AG04450 (cell line): ENCODE measurements at regions of chr2 and their contacts with region 1.

Region 1: GRCh38 chr2:219073413-219074129 is 12.8 kb upstream of the IHH start:
- DNase-seq: peak; percentile 27
- H3K4me3 ChIP-seq: no peak overlapping the region
- H3K27ac ChIP-seq: no peak overlapping the region
- H3K27me3 ChIP-seq: no peaks in the 10 kb centered on the region
- CTCF ChIP-seq: peak; percentile 63

Region 2: GRCh38 chr2:219057709-219058540 is 15.6 kb before region 1 on chr2:
- CTCF ChIA-PET with region 1: interaction called, 32 read pairs
- POLR2A ChIA-PET with region 1: interaction called, 3 read pairs
- DNase-seq: no peak
- H3K4me3 ChIP-seq: peak overlapping the region; percentile 13; the same call in 1 of the 2 replicates
- H3K27ac ChIP-seq: no peak overlapping the region
- H3K27me3 ChIP-seq: peaks cover 78% of the 10 kb centered on the region
- CTCF ChIP-seq: peak; percentile 89

Region 3: GRCh38 chr2:219104107-219105035 is 30.8 kb after region 1 on chr2:
- CTCF ChIA-PET with region 1: interaction called, 29 read pairs
- POLR2A ChIA-PET with region 1: no interaction called
- DNase-seq: no peak
- H3K4me3 ChIP-seq: no peak overlapping the region
- H3K27ac ChIP-seq: no peak overlapping the region
- H3K27me3 ChIP-seq: no peaks in the 10 kb centered on the region
- CTCF ChIP-seq: peak; percentile 84

Region 4: DNA sequence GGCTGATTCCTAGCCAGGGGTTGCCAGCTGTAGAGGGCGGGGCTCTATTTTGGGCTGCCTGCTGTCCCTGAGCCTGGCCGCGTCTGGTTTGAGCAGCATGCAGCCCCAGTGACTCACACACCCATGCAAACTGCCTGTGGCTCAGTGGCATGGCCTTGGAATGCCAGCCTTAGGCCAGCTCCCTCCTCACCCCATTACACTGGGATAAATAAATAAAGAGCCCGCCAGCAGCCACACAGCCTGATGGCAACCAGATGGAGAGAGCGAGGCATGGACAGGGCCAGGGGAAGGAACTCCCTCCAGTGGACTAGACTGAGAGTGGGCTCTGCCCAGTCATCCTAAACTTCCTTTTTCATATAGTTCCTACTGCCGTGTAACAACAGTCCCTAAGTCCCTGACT is 68.8 kb after region 1 on chr2:
- CTCF ChIA-PET with region 1: interaction called, 22 read pairs
- POLR2A ChIA-PET with region 1: no interaction called
- DNase-seq: peak; percentile 32
- H3K4me3 ChIP-seq: no peak overlapping the region
- H3K27ac ChIP-seq: peak overlapping the region; percentile 11
- H3K27me3 ChIP-seq: no peaks in the 10 kb centered on the region
- CTCF ChIP-seq: peak; percentile 35; the same call in 1 of the 2 replicates

Region 5: GRCh38 chr2:219160186-219161017 is 86.8 kb after region 1 on chr2 and contains the start of gene NHEJ1:
- CTCF ChIA-PET with region 1: interaction called, 81 read pairs
- POLR2A ChIA-PET with region 1: no interaction called
- DNase-seq: peak; percentile 82
- H3K4me3 ChIP-seq: peak within 1 kb of the TSS; percentile 89
- H3K27ac ChIP-seq: peak within 1 kb of the TSS; percentile 90
- H3K27me3 ChIP-seq: no peaks in the 10 kb centered on the region
- CTCF ChIP-seq: peak; percentile 98
- polyA plus RNA-seq, gene NHEJ1: 21.9 and 22.9 TPM in 2 replicates